ENCODE measurements at regions of chr17 and their contacts with region 1.

Region 1: GRCh38 chr17:44636562-44636961 is 19.7 kb upstream of the MEIOC start:
- DNase-seq: peak in 1 of 2 experiments; percentile 53
- H3K4me3 ChIP-seq: no peak overlapping the region
- H3K4me3 Mint-ChIP-seq: no peak overlapping the region
- H3K27ac Mint-ChIP-seq: no peak overlapping the region
- H3K4me1 ChIP-seq: no peaks in the 10 kb centered on the region
- H3K4me1 Mint-ChIP-seq: no peaks in the 10 kb centered on the region
- H3K27me3 ChIP-seq: no peaks in the 10 kb centered on the region
- H3K27me3 Mint-ChIP-seq: no peaks in the 10 kb centered on the region
- CTCF ChIP-seq: peak; percentile 42 to 51

Region 2: DNA sequence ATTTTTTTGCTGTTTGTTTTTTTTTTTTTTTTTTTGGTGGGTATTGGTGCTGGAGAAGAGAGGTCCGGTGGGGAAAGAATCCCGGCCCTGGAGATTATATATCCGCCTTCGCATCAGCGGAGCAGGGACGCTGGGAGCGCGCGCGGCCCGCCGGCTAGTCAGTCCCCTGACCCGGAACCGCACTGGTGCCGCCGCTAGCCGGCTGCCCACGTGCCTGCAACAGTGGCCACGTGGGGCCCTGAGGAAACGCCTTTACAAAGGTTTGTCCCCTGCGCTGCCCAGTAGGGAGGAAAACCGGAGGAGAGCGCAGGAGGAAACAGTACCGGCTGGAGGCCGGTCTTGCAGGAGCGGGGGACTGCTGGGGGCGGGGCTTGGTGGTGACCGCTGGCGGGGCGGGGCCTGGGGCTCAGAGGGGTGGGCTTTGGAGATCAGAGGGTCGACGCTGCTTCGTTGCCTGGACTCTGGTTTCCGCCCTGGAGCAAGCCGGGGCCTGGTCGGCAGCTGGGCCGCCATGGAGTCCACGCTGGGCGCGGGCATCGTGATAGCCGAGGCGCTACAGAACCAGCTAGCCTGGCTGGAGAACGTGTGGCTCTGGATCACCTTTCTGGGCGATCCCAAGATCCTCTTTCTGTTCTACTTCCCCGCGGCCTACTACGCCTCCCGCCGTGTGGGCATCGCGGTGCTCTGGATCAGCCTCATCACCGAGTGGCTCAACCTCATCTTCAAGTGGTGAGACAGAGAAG is 565.9 kb before region 1 on chr17 and contains the start of gene G6PC3:
- CTCF ChIA-PET with region 1: interaction called, 12 read pairs
- POLR2A ChIA-PET with region 1: no interaction called
- intact Hi-C with region 1: no loop called
- DNase-seq: peak; percentile 98 to 99
- H3K4me3 ChIP-seq: peak within 1 kb of the TSS; percentile 89
- H3K4me3 Mint-ChIP-seq: peak within 1 kb of the TSS; percentile 96
- H3K27ac Mint-ChIP-seq: peak within 1 kb of the TSS; percentile 100
- H3K4me1 ChIP-seq: peaks cover 19% of the 10 kb centered on the region
- H3K4me1 Mint-ChIP-seq: peaks cover 15% of the 10 kb centered on the region
- H3K27me3 ChIP-seq: no peaks in the 10 kb centered on the region
- H3K27me3 Mint-ChIP-seq: no peaks in the 10 kb centered on the region
- CTCF ChIP-seq: no peak
- total RNA-seq, gene G6PC3: 60.1 and 64.5 TPM in 2 replicates

Region 3: DNA sequence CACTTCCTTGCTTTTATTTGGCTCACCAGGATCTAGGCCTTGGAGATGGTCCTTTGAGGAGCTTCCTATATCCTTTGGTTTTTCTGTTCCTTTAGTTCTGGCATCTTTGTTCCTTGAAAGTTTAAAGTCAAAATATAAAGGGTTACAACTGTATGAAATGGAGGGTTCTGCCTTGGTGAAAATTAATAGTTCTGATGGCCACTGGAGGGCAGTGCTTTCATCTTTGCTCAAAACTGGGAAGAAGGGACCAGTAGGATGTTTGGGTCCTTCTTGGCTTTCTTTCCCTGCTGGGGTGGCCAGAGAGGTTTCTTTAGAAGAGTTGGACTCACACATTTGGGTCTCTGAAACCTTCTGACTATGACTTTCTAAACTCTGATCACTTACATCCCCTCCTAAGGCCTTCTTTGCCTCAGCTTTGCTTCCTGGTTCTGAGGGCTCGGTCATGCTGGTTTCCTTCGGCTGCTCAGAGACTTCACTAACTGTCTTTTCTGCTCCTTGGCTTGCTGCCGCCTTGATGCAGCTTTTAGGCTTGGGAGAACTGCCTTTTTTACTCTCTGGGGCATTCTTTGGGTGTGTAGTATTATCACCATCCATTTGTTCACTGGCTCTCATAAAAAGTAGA is 236.2 kb before region 1 on chr17:
- CTCF ChIA-PET with region 1: no interaction called
- POLR2A ChIA-PET with region 1: no interaction called
- intact Hi-C with region 1: loop called (anchors 5 kb)
- DNase-seq: peak in 1 of 2 experiments; percentile 37
- H3K4me3 ChIP-seq: no peak overlapping the region
- H3K4me3 Mint-ChIP-seq: no peak overlapping the region
- H3K27ac Mint-ChIP-seq: peak overlapping the region; percentile 40
- H3K4me1 ChIP-seq: no peaks in the 10 kb centered on the region
- H3K4me1 Mint-ChIP-seq: no peaks in the 10 kb centered on the region
- H3K27me3 ChIP-seq: no peaks in the 10 kb centered on the region
- H3K27me3 Mint-ChIP-seq: no peaks in the 10 kb centered on the region
- CTCF ChIP-seq: peak; percentile 48 to 58

Region 4: DNA sequence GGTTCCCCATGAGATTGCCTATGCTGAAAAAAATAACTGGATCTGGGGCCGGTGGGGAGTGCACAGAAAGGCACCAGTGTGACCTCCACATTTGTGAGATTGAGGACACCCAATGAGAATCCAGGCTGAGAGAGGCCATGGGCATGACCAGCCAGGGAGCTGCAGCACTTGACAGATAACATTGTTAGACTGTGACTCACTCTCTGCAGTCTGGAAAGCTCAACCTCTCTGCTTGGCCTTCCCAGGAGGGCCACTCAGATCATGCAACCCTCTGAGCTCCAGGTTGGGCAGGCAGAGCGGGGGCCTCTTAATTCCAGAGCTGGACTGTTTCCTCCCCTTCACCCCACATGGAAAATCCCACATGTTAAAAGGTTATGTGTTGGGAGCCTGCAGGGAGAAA is 49.2 kb before region 1 on chr17:
- CTCF ChIA-PET with region 1: no interaction called
- POLR2A ChIA-PET with region 1: no interaction called
- intact Hi-C with region 1: loop called (anchors 5 kb)
- DNase-seq: peak; percentile 82 to 88
- H3K4me3 ChIP-seq: no peak overlapping the region
- H3K4me3 Mint-ChIP-seq: peak overlapping the region; percentile 43
- H3K27ac Mint-ChIP-seq: peak overlapping the region; percentile 84
- H3K4me1 ChIP-seq: peaks cover 33% of the 10 kb centered on the region
- H3K4me1 Mint-ChIP-seq: peaks cover 33% of the 10 kb centered on the region
- H3K27me3 ChIP-seq: no peaks in the 10 kb centered on the region
- H3K27me3 Mint-ChIP-seq: no peaks in the 10 kb centered on the region
- CTCF ChIP-seq: no peak

Region 5: DNA sequence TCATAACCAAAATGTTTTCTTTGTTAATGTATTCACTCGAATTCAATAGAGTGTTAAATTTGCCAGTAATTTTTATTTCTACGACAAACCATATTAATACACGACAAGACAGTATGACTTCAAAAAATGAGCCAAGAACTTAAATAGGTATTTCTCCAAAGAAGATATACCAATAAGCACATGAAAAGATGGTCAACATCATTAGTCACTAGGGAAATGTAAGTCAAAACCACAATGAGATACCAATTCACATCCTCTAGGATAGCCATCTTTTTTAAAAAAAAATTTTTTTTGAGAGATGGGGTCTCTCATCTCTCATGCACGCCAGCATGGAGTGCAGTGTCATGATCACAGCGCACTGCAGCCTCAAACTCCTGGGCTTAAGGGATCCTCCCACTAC is 14.7 kb after region 1 on chr17:
- CTCF ChIA-PET with region 1: no interaction called
- POLR2A ChIA-PET with region 1: no interaction called
- intact Hi-C with region 1: no loop called
- DNase-seq: no peak
- H3K4me3 ChIP-seq: no peak overlapping the region
- H3K4me3 Mint-ChIP-seq: no peak overlapping the region
- H3K27ac Mint-ChIP-seq: no peak overlapping the region
- H3K4me1 ChIP-seq: no peaks in the 10 kb centered on the region
- H3K4me1 Mint-ChIP-seq: no peaks in the 10 kb centered on the region
- H3K27me3 ChIP-seq: no peaks in the 10 kb centered on the region
- H3K27me3 Mint-ChIP-seq: no peaks in the 10 kb centered on the region
- CTCF ChIP-seq: no peak

Region 6: GRCh38 chr17:44661835-44662234 is 25.3 kb after region 1 on chr17:
- CTCF ChIA-PET with region 1: no interaction called
- POLR2A ChIA-PET with region 1: no interaction called
- intact Hi-C with region 1: no loop called
- DNase-seq: no peak
- H3K4me3 ChIP-seq: no peak overlapping the region
- H3K4me3 Mint-ChIP-seq: no peak overlapping the region
- H3K27ac Mint-ChIP-seq: no peak overlapping the region
- H3K4me1 ChIP-seq: no peaks in the 10 kb centered on the region
- H3K4me1 Mint-ChIP-seq: no peaks in the 10 kb centered on the region
- H3K27me3 ChIP-seq: no peaks in the 10 kb centered on the region
- H3K27me3 Mint-ChIP-seq: peaks cover 4% of the 10 kb centered on the region
- CTCF ChIP-seq: no peak

Measured in Caco-2 (cell line).